Naive thymus-derived CD4-positive, alpha-beta T cell (primary cell): ENCODE measurements at regions of chr11 and their contacts with region 1.

Region 1: GRCh38 chr11:108307751-108308150 is 84.9 kb downstream of the ATM start:
- DNase-seq: no peak
- ATAC-seq: no peak
- H3K4me3 ChIP-seq: no peak overlapping the region
- H3K4me3 Mint-ChIP-seq: peak overlapping the region in 1 of 10 donors; percentile 5
- H3K27ac ChIP-seq: no peak overlapping the region
- H3K27ac Mint-ChIP-seq: peak overlapping the region in 8 of 9 donors; percentile 4 to 88 (median 62)
- H3K4me1 ChIP-seq: no peaks in the 10 kb centered on the region
- H3K4me1 Mint-ChIP-seq: peaks cover 3 to 66% (median 48%) of the 10 kb centered on the region in 7 donors
- H3K27me3 ChIP-seq: no peaks in the 10 kb centered on the region
- H3K27me3 Mint-ChIP-seq: no peaks in the 10 kb centered on the region

Region 2: DNA sequence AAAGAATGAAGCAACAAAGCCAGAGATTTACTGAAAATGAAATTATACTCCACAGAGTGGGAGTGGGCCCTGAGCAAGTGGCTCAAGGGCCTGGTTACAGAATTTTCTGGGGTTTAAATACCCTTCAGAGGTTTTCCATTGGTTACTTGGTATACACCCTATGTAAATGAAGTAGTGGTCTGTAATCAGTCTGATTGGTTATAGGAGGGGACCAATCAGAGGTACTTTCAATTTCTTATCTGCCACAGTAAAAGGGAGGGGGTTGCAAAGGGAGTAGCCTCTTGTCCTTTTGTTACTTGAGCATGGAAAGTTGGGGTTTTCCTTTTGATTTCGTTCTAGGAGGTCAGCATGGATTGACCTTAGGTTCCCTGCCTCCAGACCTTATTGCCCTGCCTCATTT is 21.4 kb before region 1 on chr11:
- CTCF ChIA-PET with region 1: no interaction called
- POLR2A ChIA-PET with region 1: no interaction called
- intact Hi-C with region 1: no loop called
- DNase-seq: peak in 4 of 9 donors; percentile 3 to 25 (median 10)
- ATAC-seq: peak; percentile 52
- H3K4me3 ChIP-seq: no peak overlapping the region
- H3K4me3 Mint-ChIP-seq: no peak overlapping the region
- H3K27ac ChIP-seq: no peak overlapping the region
- H3K27ac Mint-ChIP-seq: peak overlapping the region in 8 of 9 donors; percentile 11 to 82 (median 58)
- H3K4me1 ChIP-seq: peaks cover 0 to 6% of the 10 kb centered on the region in 2 donors
- H3K4me1 Mint-ChIP-seq: peaks cover 0 to 44% (median 34%) of the 10 kb centered on the region in 7 donors
- H3K27me3 ChIP-seq: no peaks in the 10 kb centered on the region
- H3K27me3 Mint-ChIP-seq: no peaks in the 10 kb centered on the region

Region 3: DNA sequence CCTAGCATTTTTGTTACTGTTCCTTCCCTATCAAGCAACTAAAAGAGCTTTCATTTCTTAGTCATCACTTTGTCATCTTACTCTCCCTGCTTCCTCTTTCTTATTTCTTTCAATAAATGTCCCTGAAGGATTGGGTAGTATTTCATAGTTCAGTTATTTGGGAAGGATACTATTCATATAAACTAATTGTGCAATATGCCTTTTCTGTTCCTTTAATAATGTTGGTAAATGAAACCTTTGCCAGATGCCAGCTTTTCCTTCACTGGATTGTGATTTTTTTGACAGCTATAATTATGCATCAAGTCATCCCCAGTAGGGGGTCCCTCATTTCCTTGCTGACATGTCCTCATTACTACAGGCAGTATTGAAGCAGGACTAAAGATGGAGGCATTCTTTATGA is 16.8 kb after region 1 on chr11:
- CTCF ChIA-PET with region 1: no interaction called
- POLR2A ChIA-PET with region 1: interaction called, 3 read pairs
- intact Hi-C with region 1: loop called in 1 of 2 experiments (anchors 2 kb)
- DNase-seq: no peak
- ATAC-seq: no peak
- H3K4me3 ChIP-seq: no peak overlapping the region
- H3K4me3 Mint-ChIP-seq: no peak overlapping the region
- H3K27ac ChIP-seq: no peak overlapping the region
- H3K27ac Mint-ChIP-seq: peak overlapping the region in 6 of 9 donors; percentile 4 to 77 (median 55)
- H3K4me1 ChIP-seq: no peaks in the 10 kb centered on the region
- H3K4me1 Mint-ChIP-seq: peaks cover 0 to 17% (median 5%) of the 10 kb centered on the region in 7 donors
- H3K27me3 ChIP-seq: no peaks in the 10 kb centered on the region
- H3K27me3 Mint-ChIP-seq: no peaks in the 10 kb centered on the region